Activated CD4-positive, alpha-beta memory T cell treated with anti-CD3 and anti-CD28 coated beads, Interleukin-2, amount 10 ng/mL, durations not matched to agents 7 days and 5 days (primary cell): ENCODE measurements at regions of chr3 and their contacts with region 1.

Region 1: GRCh38 chr3:52880474-52880873 is 16.9 kb downstream of the STIMATE start:
- DNase-seq: no peak
- H3K4me3 Mint-ChIP-seq: no peak overlapping the region
- H3K27ac Mint-ChIP-seq: no peak overlapping the region
- H3K4me1 Mint-ChIP-seq: peaks cover 11% of the 10 kb centered on the region
- H3K27me3 Mint-ChIP-seq: no peaks in the 10 kb centered on the region

Region 2: DNA sequence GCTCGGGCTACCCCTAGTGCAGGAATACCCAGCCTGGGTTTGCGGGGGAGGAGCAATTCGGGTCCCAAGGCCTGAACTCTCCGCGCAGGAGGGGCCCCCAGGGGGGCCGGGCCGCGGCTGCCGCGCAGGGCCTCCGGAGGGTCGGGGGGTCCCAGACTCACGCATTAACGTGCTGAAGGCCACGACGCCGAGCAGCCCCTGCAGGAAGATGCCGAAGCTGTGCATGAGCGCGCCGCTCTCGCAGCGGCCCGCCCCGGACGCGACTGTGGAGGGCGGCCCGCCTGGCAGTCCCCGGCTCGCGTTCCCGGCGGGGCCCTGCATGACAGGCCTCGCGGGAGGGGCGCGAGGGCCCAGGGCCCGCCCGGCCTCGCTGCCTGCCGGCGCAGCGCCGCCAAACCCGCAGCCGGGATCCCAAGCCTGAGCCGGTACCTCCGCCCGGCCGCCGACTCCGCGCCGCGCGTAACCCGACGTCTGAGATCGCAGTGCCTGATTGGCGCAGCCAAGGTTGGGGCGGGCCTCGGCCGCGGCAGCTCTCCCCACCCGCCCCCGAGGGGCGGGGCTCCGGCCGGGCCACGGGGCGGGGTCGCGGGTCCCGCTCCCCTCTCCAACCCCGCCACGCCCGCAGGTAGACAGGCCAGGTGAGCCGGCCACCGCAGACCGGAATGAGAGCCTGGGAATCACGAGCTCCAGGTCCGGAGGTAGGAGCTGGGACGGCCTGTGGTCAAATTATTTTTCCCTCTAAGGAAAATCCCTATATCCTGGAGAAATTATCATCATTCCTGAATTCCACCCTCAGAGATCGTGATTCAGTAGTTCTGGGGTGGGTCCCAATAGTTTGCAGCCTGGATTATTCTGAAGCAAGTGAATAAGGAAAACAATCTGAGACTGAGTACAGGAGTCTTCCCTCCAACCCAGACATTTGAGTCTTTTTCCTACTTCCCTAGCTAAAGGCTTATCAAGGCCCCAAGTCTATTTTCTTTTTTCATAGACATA is 17.0 kb after region 1 on chr3 and contains the start of gene STIMATE:
- CTCF ChIA-PET with region 1: interaction called, 17 read pairs
- POLR2A ChIA-PET with region 1: interaction called, 3 read pairs
- DNase-seq: peak; percentile 89
- H3K4me3 Mint-ChIP-seq: peak within 1 kb of the TSS; percentile 99
- H3K27ac Mint-ChIP-seq: peak within 1 kb of the TSS; percentile 73
- H3K4me1 Mint-ChIP-seq: peaks cover 46% of the 10 kb centered on the region
- H3K27me3 Mint-ChIP-seq: no peaks in the 10 kb centered on the region
- total RNA-seq, gene STIMATE: 31.9 to 34.7 TPM